ENCODE measurements at regions of chr1 and their contacts with region 1.

Region 1: DNA sequence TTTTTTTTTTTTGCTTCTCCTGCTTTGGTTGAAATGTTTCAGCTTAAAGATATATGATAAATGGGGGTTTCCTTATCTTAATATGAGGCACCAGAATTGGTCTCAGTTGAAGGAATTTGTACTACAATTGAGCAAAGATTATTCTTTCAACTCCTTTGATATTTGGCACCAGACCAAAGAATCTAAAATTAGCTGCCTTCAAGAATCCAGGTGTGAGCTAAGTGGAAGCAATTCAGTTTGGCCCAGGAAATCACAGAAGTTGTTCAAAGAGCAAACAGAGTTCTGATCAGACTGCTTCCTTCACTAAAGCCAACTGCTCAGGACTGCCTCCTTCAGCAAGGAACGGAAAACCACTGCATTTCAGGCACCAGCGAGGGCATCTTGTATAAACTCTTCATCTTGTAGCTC is 68.3 kb upstream of the BCAR3 start:
- DNase-seq: no peak
- ATAC-seq: peak; percentile 56
- H3K4me3 ChIP-seq: no peak overlapping the region
- H3K27ac ChIP-seq: no peak overlapping the region
- H3K4me1 ChIP-seq: peaks cover 19% of the 10 kb centered on the region
- H3K27me3 ChIP-seq: no peaks in the 10 kb centered on the region
- CTCF ChIP-seq: peak in 2 of 3 experiments; percentile 9 to 41; a peak in 2 of 6 replicates
- EP300 ChIP-seq: no peak
- POLR2A ChIP-seq: no peak
- RAD21 ChIP-seq: peak; percentile 39; the same call in 1 of the 2 replicates

Region 2: DNA sequence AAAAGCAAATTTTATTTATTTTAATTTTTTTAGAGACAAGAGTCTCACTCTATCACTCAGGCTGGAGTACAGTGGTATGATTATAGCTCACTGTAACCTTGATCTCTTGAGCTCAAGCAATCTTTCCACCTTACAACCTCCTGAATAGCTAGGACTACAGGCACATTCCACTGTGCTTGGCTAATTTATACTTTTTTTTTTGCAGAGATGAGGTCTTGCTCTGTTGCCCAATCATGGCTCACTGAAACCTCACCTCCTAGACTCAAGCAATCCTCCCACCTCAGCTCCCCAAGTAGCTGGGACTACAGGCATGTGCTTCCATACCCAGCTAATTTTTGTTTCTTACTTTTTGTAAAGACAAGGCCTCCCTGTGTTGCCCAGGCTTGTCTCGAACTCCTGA is 354.7 kb before region 1 on chr1:
- CTCF ChIA-PET with region 1: no interaction called
- POLR2A ChIA-PET with region 1: no interaction called
- RAD21 ChIA-PET with region 1: no interaction called
- SMC1A ChIA-PET with region 1: no interaction called
- in situ Hi-C with region 1: no loop called
- intact Hi-C with region 1: no loop called
- DNase-seq: no peak
- ATAC-seq: no peak
- H3K4me3 ChIP-seq: no peak overlapping the region
- H3K27ac ChIP-seq: no peak overlapping the region
- H3K4me1 ChIP-seq: no peaks in the 10 kb centered on the region
- H3K27me3 ChIP-seq: no peaks in the 10 kb centered on the region
- CTCF ChIP-seq: no peak
- EP300 ChIP-seq: no peak
- POLR2A ChIP-seq: no peak
- RAD21 ChIP-seq: no peak

Region 3: GRCh38 chr1:93680757-93681550 is 68.9 kb before region 1 on chr1:
- CTCF ChIA-PET with region 1: interaction called, 6 read pairs
- POLR2A ChIA-PET with region 1: interaction called, 4 read pairs
- RAD21 ChIA-PET with region 1: interaction called, 24 read pairs
- SMC1A ChIA-PET with region 1: interaction called, 27 read pairs
- in situ Hi-C with region 1: no loop called
- intact Hi-C with region 1: no loop called
- DNase-seq: no peak
- ATAC-seq: peak; percentile 82
- H3K4me3 ChIP-seq: peak overlapping the region; percentile 87
- H3K27ac ChIP-seq: no peak overlapping the region
- H3K4me1 ChIP-seq: peaks cover 13% of the 10 kb centered on the region; the same call in 1 of the 2 replicates
- H3K27me3 ChIP-seq: peaks cover 0 to 4% of the 10 kb centered on the region in 2 experiments; a peak in 2 of 4 replicates
- CTCF ChIP-seq: peak; percentile 46 to 66 (median 52); a peak in 5 of 6 replicates
- EP300 ChIP-seq: no peak
- POLR2A ChIP-seq: no peak
- RAD21 ChIP-seq: peak; percentile 51; the same call in 1 of the 2 replicates

Region 4: DNA sequence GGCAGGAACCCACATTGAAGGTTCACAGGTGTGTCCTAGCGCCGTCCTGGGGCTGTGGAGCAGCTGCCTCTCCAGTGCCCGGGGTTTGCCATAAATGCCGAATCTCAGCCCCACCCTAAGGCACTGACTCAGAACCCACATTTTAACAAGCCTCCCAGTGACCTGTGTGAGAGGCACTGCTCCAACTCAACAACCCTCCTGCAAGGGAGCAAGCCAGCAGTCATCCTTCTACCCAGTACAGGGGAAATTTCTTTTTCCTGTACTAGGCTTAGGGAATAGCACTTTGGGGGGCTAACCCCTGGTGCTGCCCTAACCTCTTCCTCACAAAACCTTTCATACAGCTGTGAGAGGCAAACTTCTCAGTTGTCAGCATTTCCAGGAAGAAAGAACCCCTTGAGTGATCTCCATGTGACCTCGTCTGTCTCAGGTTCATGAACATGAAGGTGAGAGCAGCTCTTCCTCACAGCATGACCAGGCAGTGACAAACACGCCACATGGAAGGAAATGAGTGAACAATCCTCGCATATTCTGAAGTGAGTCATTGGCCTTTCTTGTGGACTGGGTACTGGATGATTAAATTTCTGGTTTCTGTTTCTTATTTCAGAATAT is 56.8 kb before region 1 on chr1:
- CTCF ChIA-PET with region 1: no interaction called
- POLR2A ChIA-PET with region 1: interaction called, 4 read pairs
- RAD21 ChIA-PET with region 1: interaction called, 3 read pairs
- SMC1A ChIA-PET with region 1: interaction called, 12 read pairs
- in situ Hi-C with region 1: no loop called
- intact Hi-C with region 1: loop called (anchors 1 kb)
- DNase-seq: peak; percentile 63
- ATAC-seq: peak; percentile 88
- H3K4me3 ChIP-seq: no peak overlapping the region
- H3K27ac ChIP-seq: peak overlapping the region; percentile 30
- H3K4me1 ChIP-seq: peaks cover 44% of the 10 kb centered on the region
- H3K27me3 ChIP-seq: no peaks in the 10 kb centered on the region
- CTCF ChIP-seq: no peak
- EP300 ChIP-seq: peak in 1 of 2 experiments; percentile 14; a peak in 1 of 4 replicates
- POLR2A ChIP-seq: no peak
- RAD21 ChIP-seq: no peak

Region 5: GRCh38 chr1:93708734-93709481 is 41.0 kb before region 1 on chr1:
- CTCF ChIA-PET with region 1: interaction called, 18 read pairs
- POLR2A ChIA-PET with region 1: interaction called, 6 read pairs
- RAD21 ChIA-PET with region 1: interaction called, 17 read pairs
- SMC1A ChIA-PET with region 1: interaction called, 39 read pairs
- in situ Hi-C with region 1: no loop called
- intact Hi-C with region 1: no loop called
- DNase-seq: no peak
- ATAC-seq: peak; percentile 22
- H3K4me3 ChIP-seq: peak overlapping the region; percentile 23; the same call in 1 of the 2 replicates
- H3K27ac ChIP-seq: peak overlapping the region; percentile 69
- H3K4me1 ChIP-seq: peaks cover 61% of the 10 kb centered on the region
- H3K27me3 ChIP-seq: no peaks in the 10 kb centered on the region
- CTCF ChIP-seq: no peak
- EP300 ChIP-seq: no peak
- POLR2A ChIP-seq: no peak
- RAD21 ChIP-seq: no peak